ENCODE measurements at regions of chr5 and their contacts with region 1.

Region 1: GRCh38 chr5:103031607-103032006 is 88.3 kb downstream of the GIN1 start:
- DNase-seq: no peak
- ATAC-seq: no peak

Region 2: GRCh38 chr5:102536323-102536928 is 495.2 kb before region 1 on chr5:
- intact Hi-C with region 1: loop called in 1 of 2 experiments (anchors 10 kb)
- DNase-seq: no peak
- ATAC-seq: no peak

Region 3: DNA sequence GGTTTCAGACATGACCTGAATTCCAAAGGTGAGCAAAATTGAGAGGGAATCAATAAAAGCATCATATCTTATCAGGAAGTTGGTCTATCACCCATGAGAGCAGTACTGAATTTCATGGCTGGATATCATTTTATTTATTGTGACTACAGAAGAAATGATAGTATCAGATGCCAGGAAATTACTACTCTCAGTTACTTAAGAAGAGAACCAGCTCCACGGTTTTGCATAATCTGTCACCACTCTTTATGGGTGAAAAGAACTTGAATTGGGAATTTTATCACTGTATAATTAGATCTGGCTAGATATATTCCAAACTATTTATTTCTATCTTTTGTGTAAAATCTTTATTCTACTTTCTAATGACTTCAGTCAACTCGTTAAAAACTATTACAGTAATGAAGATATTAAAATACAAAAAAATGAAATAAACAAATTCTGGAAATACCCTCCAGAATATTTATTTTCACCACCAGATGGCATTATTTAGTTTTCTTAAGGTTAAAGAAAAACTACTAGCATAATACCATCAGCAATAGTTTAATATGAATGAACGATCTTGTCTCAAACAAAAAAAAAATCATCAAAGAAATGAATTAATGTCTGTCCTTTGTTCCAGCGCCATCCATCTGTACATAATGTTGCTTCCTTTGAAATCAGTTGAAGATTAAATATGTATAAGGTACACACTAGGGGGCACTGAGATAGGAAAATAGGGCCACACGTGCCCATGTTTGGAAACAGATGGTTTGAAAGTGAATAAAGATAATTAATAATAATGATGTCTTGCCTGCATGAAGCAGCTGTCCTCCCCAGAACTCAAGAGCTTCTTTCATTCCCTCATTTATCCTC is 448.1 kb before region 1 on chr5:
- intact Hi-C with region 1: loop called in 1 of 2 experiments (anchors 10 kb)
- DNase-seq: no peak
- ATAC-seq: no peak

Measured in left cardiac atrium (tissue), 4 donors.